Heart left ventricle (tissue), 16 donors: ENCODE measurements at regions of chr10 and their contacts with region 1.

Region 1: DNA sequence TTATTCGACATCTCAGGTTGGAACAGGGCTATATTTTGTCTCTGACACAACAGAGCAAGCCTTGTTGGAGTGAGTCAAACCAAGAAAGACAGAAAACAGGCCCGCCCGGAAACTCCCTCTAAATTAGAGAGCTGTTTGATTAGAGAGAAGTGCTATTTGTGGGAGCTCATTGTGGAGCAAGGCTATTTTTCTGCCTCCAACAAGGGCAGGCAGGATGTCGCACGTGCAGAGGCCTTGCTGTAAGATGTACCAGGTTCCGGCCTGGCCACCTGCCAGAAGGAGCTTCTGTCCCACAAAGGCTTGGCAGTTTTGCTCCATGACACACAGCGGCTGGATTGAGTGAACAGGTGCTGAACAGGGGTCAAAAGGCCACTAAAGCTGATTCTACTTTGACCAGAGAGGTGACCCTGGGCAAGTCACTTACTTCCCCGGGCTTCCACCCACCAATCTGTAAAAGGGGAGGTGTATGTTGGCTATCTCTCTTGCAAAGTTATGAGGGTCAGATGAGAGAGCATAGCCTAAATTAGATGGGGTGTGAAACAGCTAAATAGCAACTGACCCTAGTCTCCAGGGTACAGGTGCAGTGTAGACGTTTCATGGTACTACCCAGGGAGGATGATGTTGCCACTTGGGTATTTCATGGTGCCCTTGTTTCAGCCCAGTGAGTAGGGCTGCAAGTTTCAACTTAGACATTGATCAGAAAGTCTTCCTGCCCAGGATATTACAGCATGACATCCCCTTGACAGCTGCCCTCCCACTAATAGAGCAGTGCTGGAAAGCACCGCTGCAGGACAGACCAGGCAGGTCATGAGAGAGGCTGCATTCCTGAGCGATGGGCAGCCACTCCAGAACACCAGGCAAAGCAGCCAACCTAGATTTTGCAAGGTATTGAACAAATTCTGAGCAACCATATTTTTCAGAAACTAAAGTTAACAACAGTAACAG is 62.0 kb downstream of the VSTM4 start:
- DNase-seq: peak in 4 of 5 donors; percentile 36 to 69 (median 50)
- ATAC-seq: peak; percentile 12 to 80 (median 70)
- H3K4me3 ChIP-seq: no peak overlapping the region
- H3K27ac ChIP-seq: peak overlapping the region in 10 of 12 donors; percentile 2 to 76 (median 44)
- H3K4me1 ChIP-seq: peaks cover 0 to 59% (median 30%) of the 10 kb centered on the region in 12 donors
- H3K27me3 ChIP-seq: no peaks in the 10 kb centered on the region
- CTCF ChIP-seq: no peak
- POLR2A ChIP-seq: no peak

Region 2: GRCh38 chr10:49009199-49009979 is 43.9 kb before region 1 on chr10:
- intact Hi-C with region 1: loop called in 1 of 10 experiments (anchors 5 kb)
- DNase-seq: no peak
- ATAC-seq: peak; percentile 7 to 60 (median 26)
- H3K4me3 ChIP-seq: no peak overlapping the region
- H3K27ac ChIP-seq: peak overlapping the region; percentile 28 to 90 (median 74)
- H3K4me1 ChIP-seq: peaks cover 0 to 60% (median 34%) of the 10 kb centered on the region in 12 donors
- H3K27me3 ChIP-seq: no peaks in the 10 kb centered on the region
- CTCF ChIP-seq: no peak
- POLR2A ChIP-seq: no peak

Region 3: DNA sequence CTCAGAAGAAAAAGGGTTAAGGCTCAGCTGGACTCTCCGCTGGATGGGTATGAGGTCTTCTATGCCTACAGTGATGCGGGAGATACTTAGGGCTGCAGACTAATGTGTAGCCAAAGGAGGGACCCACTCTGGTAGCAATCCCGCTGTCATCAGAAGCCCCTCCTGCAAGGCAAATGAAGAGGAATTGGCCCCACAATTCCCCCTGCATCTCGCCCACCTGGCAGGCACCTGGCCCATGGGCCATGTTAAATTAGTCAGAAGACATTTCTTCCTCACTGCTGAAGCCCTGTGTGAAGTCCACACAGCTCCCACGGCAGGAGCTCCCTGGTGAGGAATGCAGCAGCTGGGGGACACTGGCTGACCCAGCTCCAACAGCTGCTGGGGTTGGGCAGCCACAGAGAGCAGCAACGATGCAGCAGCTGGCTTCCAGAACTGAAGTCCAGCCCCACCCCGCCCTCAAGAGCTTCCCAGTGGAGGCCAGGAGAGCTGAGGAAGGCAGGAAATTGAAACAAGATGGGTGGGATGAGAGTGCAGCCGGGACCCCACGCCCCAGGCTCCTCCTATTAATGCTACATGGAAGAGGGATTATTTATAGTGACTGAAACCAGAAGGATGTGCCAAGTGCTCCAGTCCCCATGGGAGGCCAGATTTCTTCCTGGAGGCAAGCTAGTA is 56.5 kb after region 1 on chr10:
- intact Hi-C with region 1: loop called in 4 of 10 experiments (anchors 5 to 10 kb)
- DNase-seq: peak; percentile 81 to 91 (median 86)
- ATAC-seq: peak; percentile 76 to 88 (median 81)
- H3K4me3 ChIP-seq: peak overlapping the region in 4 of 12 donors; percentile 7 to 33 (median 22)
- H3K27ac ChIP-seq: peak overlapping the region in 9 of 12 donors; percentile 6 to 72 (median 53)
- H3K4me1 ChIP-seq: peaks cover 7 to 100% (median 68%) of the 10 kb centered on the region in 12 donors
- H3K27me3 ChIP-seq: no peaks in the 10 kb centered on the region
- CTCF ChIP-seq: no peak
- POLR2A ChIP-seq: no peak

Region 4: DNA sequence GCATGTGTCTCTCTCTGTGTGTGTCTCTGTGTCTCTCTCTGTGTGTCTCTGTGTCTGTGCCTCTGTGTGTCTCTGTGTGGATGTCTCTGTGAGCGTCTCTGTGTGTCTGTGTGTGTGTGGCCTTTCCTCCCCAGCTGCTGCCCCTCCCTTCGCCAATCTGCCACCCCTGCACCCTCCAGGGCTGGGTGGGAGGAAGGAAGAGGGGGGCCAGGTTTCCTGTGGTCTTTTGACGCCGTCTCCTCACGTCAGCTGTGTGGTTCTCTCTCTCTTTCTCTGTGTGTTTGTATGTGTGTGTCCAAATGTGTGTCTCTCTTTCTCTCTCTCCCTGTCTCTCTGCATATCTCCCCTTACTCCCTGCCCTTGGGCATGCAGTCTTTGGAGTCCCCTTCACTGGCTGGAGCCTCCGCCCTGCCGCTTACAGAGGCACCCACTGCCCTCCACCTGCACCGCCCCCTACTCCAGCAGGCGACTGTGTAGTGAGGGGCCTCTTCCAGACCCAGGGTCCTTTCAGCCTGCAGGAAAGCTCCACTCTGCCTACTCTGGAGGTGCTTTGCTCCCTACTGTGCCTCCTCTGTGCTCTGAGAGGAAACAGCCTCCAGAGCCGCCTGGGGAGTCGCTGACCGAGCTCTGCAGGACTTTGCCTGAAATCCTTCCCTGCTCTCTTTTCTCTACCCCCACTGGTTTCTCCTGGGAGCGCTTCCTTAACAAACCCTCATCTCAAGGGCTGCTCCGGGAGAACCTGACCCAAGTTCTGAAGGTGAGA is 201.4 kb after region 1 on chr10:
- intact Hi-C with region 1: no loop called
- DNase-seq: peak in 1 of 5 donors; percentile 54
- ATAC-seq: peak in 2 of 4 donors; percentile 33 to 34
- H3K4me3 ChIP-seq: no peak overlapping the region
- H3K27ac ChIP-seq: no peak overlapping the region
- H3K4me1 ChIP-seq: peaks cover 0 to 20% (median 1%) of the 10 kb centered on the region in 12 donors
- H3K27me3 ChIP-seq: no peaks in the 10 kb centered on the region
- CTCF ChIP-seq: no peak
- POLR2A ChIP-seq: no peak